Left lung (tissue), 14 donors: ENCODE measurements at regions of chr10 and their contacts with region 1.

Region 1: GRCh38 chr10:7410862-7411670 is at the start of gene SFMBT2:
- DNase-seq: peak; percentile 62 to 87 (median 74)
- ATAC-seq: peak; percentile 62
- H3K4me3 ChIP-seq: peak within 1 kb of the TSS; percentile 64 to 69
- H3K27ac ChIP-seq: peak within 1 kb of the TSS; percentile 42 to 58
- H3K4me1 ChIP-seq: peaks cover 15 to 66% of the 10 kb centered on the region in 2 donors
- H3K27me3 ChIP-seq: peaks cover 25 to 69% of the 10 kb centered on the region in 2 donors
- CTCF ChIP-seq: peak in 1 of 2 donors; percentile 12
- polyA plus RNA-seq, gene SFMBT2: 4.1 to 5.4 (median 5.0) TPM

Region 2: DNA sequence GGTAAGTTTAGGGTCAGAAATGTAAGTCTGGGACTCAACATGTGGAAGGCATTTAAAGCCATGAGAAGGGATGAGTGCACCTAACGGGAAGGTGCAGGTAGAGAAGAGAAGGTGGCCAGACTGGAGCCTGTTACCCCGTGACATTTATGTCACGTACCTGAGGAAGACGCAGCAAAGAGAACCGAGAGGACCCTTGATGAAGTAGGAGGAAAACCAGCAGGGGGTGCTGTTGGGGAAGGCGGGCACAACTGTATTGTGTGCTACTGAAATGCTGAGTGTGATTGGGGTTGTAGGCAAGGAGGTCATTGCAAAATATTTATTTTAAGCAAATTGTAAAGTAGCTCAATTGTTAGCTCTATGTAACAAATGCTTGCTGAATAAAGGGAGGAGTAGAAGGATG is 492.8 kb before region 1 on chr10:
- intact Hi-C with region 1: loop called in 1 of 2 experiments (anchors 10 kb)
- DNase-seq: peak in 2 of 4 donors; percentile 42 to 64
- ATAC-seq: peak; percentile 44
- H3K4me3 ChIP-seq: no peak overlapping the region
- H3K27ac ChIP-seq: no peak overlapping the region
- H3K4me1 ChIP-seq: peaks cover 0 to 15% of the 10 kb centered on the region in 2 donors
- H3K27me3 ChIP-seq: peaks cover 0 to 11% of the 10 kb centered on the region in 2 donors
- CTCF ChIP-seq: peak; percentile 40 to 57

Region 3: GRCh38 chr10:7260412-7260900 is 150.6 kb before region 1 on chr10:
- intact Hi-C with region 1: loop called in 1 of 2 experiments (anchors 5 kb)
- DNase-seq: peak in 3 of 4 donors; percentile 57 to 93 (median 89)
- ATAC-seq: peak; percentile 90
- H3K4me3 ChIP-seq: no peak overlapping the region
- H3K27ac ChIP-seq: peak overlapping the region; percentile 18 to 33
- H3K4me1 ChIP-seq: peaks cover 5 to 36% of the 10 kb centered on the region in 2 donors
- H3K27me3 ChIP-seq: no peaks in the 10 kb centered on the region
- CTCF ChIP-seq: peak; percentile 57 to 69